ENCODE measurements at regions of chr3 and their contacts with region 1.

Region 1: GRCh38 chr3:135992072-135992471 is 26.5 kb downstream of the PPP2R3A start:
- DNase-seq: no peak
- ATAC-seq: peak in 1 of 2 donors; percentile 62
- H3K4me3 ChIP-seq: no peak overlapping the region
- H3K27ac ChIP-seq: peak overlapping the region; percentile 7 to 42 (median 40)
- H3K4me1 ChIP-seq: peaks cover 37 to 49% of the 10 kb centered on the region in 2 donors
- H3K27me3 ChIP-seq: no peaks in the 10 kb centered on the region
- CTCF ChIP-seq: no peak
- POLR2A ChIP-seq: no peak

Region 2: DNA sequence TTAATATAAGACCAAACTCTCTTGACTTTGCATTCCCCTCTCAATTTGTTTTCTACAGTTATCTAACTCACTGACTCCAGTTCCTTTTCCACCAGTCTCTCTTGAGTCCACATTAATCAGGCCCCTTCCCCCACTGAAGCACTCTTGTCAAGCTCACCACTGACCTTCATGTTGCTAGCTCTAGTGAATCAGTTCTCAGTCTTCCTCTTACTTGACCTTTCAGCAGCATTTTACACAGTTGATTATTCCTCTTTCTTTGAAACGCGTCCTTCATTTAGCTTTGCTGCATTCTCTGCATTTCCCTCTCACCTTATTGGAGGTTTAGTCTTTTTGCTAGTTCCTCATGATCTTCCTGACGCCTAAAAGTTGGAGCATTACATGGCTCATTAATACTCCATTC is 18.2 kb before region 1 on chr3:
- in situ Hi-C with region 1: no loop called
- intact Hi-C with region 1: no loop called
- DNase-seq: no peak
- ATAC-seq: no peak
- H3K4me3 ChIP-seq: no peak overlapping the region
- H3K27ac ChIP-seq: peak overlapping the region in 1 of 4 donors; percentile 43
- H3K4me1 ChIP-seq: peaks cover 38 to 48% of the 10 kb centered on the region in 2 donors
- H3K27me3 ChIP-seq: no peaks in the 10 kb centered on the region
- CTCF ChIP-seq: no peak
- POLR2A ChIP-seq: no peak

Region 3: GRCh38 chr3:136022529-136023263 is 30.6 kb after region 1 on chr3:
- in situ Hi-C with region 1: no loop called
- intact Hi-C with region 1: loop called (anchors 2 kb)
- DNase-seq: no peak
- ATAC-seq: peak; percentile 65 to 82
- H3K4me3 ChIP-seq: peak overlapping the region; percentile 37 to 49 (median 48)
- H3K27ac ChIP-seq: peak overlapping the region; percentile 78 to 86 (median 82)
- H3K4me1 ChIP-seq: peaks cover 72 to 73% of the 10 kb centered on the region in 2 donors
- H3K27me3 ChIP-seq: no peaks in the 10 kb centered on the region
- CTCF ChIP-seq: no peak
- POLR2A ChIP-seq: no peak